Mammary epithelial cell (primary cell): ENCODE measurements at regions of chr1 and their contacts with region 1.

Region 1: GRCh38 chr1:31182352-31182751 is 57.3 kb downstream of the NKAIN1 start:
- DNase-seq: peak; percentile 96
- H3K4me3 ChIP-seq: peak overlapping the region in 1 of 3 experiments; percentile 31
- H3K27ac ChIP-seq: no peak overlapping the region
- H3K4me1 ChIP-seq: peaks cover 13% of the 10 kb centered on the region
- H3K27me3 ChIP-seq: no peaks in the 10 kb centered on the region
- CTCF ChIP-seq: peak; percentile 16 to 57

Region 2: DNA sequence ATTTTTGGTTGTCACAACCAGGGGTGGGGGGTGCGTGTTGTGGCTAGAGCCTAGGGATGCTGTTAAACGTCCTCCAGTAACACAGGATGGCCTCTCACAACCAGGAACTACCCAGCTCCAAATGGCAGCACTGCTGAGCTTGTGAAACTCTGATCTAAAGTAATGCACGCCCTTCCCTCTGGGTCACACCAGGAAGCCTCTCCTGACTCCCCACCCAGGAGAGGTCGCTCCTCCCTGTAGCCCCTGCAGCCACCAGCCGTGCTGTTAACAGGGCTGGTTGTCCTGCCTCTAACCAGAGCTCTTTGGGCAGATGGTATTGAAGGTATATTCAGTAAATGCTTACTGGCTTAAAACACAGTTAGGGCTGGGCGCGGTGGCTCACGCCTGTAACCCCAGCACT is 15.9 kb before region 1 on chr1:
- CTCF ChIA-PET with region 1: interaction called, 22 read pairs
- dilution Hi-C with region 1: no loop called
- in situ Hi-C with region 1: no loop called
- intact Hi-C with region 1: loop called (anchors 1 kb)
- DNase-seq: no peak
- H3K4me3 ChIP-seq: no peak overlapping the region
- H3K27ac ChIP-seq: no peak overlapping the region
- H3K4me1 ChIP-seq: peaks cover 18% of the 10 kb centered on the region
- H3K27me3 ChIP-seq: no peaks in the 10 kb centered on the region
- CTCF ChIP-seq: no peak

Region 3: DNA sequence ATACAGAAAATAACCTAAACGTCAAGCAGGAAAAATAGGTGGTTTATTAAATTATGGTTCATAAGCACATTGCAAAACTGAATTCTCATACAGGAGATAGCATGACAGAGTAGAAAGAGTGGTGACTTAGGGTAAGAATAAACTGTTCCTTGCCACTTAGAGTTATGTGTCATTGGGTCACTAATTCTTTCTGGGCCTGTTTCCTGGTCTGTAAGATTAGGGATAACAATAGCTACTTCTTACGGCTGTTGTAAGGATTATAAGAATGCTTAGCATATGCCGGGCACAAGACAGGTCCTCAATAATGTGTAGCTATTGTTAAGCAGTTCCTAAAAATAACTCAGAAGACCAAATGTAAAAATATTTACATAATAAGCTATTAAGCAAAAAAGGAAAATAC is 90.0 kb after region 1 on chr1:
- CTCF ChIA-PET with region 1: no interaction called
- dilution Hi-C with region 1: no loop called
- in situ Hi-C with region 1: no loop called
- intact Hi-C with region 1: loop called (anchors 2 kb)
- DNase-seq: no peak
- H3K4me3 ChIP-seq: no peak overlapping the region
- H3K27ac ChIP-seq: no peak overlapping the region
- H3K4me1 ChIP-seq: peaks cover 8% of the 10 kb centered on the region
- H3K27me3 ChIP-seq: no peaks in the 10 kb centered on the region
- CTCF ChIP-seq: no peak

Region 4: GRCh38 chr1:31327381-31327780 is 145.0 kb after region 1 on chr1:
- CTCF ChIA-PET with region 1: no interaction called
- dilution Hi-C with region 1: no loop called
- in situ Hi-C with region 1: loop called in 1 of 2 experiments (anchors 10 kb)
- intact Hi-C with region 1: loop called (anchors 2 kb)
- DNase-seq: peak; percentile 72
- H3K4me3 ChIP-seq: no peak overlapping the region
- H3K27ac ChIP-seq: peak overlapping the region; percentile 69
- H3K4me1 ChIP-seq: peaks cover 11% of the 10 kb centered on the region
- H3K27me3 ChIP-seq: no peaks in the 10 kb centered on the region
- CTCF ChIP-seq: no peak

Region 5: GRCh38 chr1:31394628-31395193 is 212.4 kb after region 1 on chr1:
- CTCF ChIA-PET with region 1: interaction called, 9 read pairs
- dilution Hi-C with region 1: no loop called
- in situ Hi-C with region 1: no loop called
- intact Hi-C with region 1: loop called (anchors 1 kb)
- DNase-seq: peak; percentile 87
- H3K4me3 ChIP-seq: no peak overlapping the region
- H3K27ac ChIP-seq: no peak overlapping the region
- H3K4me1 ChIP-seq: peaks cover 42% of the 10 kb centered on the region
- H3K27me3 ChIP-seq: no peaks in the 10 kb centered on the region
- CTCF ChIP-seq: peak; percentile 83 to 95

Region 6: DNA sequence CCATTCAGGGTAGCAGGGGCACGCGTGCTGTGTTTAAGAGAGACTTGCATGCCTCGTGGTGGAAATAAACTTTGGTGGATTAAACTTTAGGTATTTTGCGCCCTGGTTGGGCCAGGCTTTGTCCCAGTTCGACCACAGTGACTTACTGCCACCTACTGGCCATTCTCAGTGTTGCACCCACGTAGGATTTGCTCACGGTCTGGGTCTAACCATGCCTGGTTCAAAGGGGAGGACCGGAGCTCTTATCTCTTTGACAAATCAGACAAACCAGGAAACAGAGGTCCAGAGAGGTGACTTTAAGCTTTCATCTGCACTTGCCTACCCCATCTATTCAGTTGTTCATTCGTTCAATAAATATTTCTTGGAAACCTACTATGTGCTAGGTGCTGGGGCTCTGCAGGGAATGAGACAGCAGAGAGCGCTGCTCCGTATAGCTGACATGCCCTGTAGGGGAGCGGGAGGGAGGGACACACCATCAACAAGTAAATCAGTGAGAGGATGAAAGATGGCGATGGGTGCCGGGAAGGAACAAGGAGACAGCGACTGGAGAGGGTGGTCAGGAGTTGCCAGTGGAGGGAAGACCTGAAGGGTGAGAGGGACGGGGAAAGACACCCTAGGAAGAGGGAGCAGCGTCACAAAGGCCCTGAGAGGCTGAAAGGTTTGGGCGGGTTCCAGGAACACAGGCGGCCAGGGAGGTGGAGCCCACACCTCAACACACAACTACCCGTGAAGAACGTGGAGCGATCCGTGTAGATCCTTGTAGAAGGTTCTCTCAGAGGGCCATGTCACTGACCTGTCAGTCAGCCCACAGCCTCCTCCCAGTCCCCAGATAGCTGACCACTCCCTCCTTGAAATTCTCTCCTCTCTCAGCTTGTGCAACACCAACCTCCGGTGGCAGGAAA is 366.8 kb after region 1 on chr1:
- CTCF ChIA-PET with region 1: interaction called, 3 read pairs
- dilution Hi-C with region 1: loop called (anchors 25 kb)
- in situ Hi-C with region 1: loop called in 1 of 2 experiments (anchors 10 kb)
- intact Hi-C with region 1: loop called (anchors 1 kb)
- DNase-seq: peak; percentile 89
- H3K4me3 ChIP-seq: peak overlapping the region; percentile 7 to 47 (median 30)
- H3K27ac ChIP-seq: peak overlapping the region; percentile 23
- H3K4me1 ChIP-seq: peaks cover 19% of the 10 kb centered on the region
- H3K27me3 ChIP-seq: no peaks in the 10 kb centered on the region
- CTCF ChIP-seq: peak; percentile 84